HepG2 (cell line): ENCODE measurements at regions of chr9 and their contacts with region 1.

Region 1: DNA sequence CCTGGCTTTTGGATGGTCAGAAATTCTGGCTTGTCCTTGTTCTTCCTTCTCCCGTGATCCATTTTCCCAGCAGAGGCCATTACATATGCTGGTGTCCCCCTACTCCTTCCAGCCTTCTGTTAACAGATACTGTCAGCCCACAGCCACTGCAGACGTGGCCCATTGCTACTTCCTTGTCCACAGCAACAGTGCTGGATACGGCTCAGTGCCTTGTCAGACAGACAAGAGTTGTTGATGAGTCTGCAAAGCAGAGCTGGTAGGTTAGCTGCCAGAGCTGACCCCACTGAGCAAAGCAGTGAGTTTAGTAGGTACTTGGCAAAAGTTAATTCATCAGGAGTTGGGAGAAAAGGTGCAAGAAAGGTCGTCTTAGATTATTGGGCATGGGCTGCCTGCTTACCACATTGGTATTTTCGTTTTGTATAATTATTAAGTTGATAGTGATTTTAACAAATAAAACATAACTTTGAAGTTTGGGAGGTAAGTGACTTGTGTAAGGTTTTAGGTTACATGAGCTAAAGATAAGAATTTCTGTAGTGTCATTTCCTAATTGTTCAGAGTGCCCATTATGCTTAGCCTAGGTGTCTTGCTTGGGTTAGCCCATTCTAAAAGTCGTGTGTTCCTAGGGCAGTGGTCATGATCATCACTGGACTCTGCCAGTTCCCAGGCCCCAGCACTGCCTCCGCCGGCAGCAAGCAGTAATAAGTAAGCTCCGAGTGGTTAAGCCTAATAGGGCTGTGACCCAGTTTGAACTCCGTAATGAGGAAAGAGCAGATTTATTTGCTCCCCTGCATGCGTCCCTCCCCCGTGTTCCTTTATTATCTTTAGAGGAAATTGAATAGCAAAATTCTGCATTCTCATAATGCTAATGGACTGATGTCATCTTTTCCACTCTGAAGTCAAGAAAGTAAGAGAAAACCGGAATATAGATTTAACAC is 292.0 kb downstream of the FANCC start:
- DNase-seq: peak; percentile 80
- ATAC-seq: peak; percentile 46
- H3K4me3 ChIP-seq: 0 out of 6 replicates have a peak overlapping the region, but pooled peaks of 1 of the 3 experiments have one; percentile 47
- H3K27ac ChIP-seq: peak overlapping the region; percentile 94
- H3K4me1 ChIP-seq: peaks cover 100% of the 10 kb centered on the region
- H3K27me3 ChIP-seq: no peaks in the 10 kb centered on the region
- CTCF ChIP-seq: peak; percentile 44
- EP300 ChIP-seq: peak; percentile 28 to 35; a peak in 1 of 4 replicates
- POLR2A ChIP-seq: 0 out of 4 replicates have a peak, but pooled peaks of 1 of the 2 experiments have one; percentile 13
- RAD21 ChIP-seq: 0 out of 2 replicates have a peak, but pooled peaks have one; percentile 40

Region 2: GRCh38 chr9:95073021-95073607 is 47.6 kb after region 1 on chr9:
- CTCF ChIA-PET with region 1: no interaction called
- POLR2A ChIA-PET with region 1: interaction called, 21 read pairs
- in situ Hi-C with region 1: no loop called
- intact Hi-C with region 1: no loop called
- DNase-seq: peak; percentile 25
- ATAC-seq: peak; percentile 47
- H3K4me3 ChIP-seq: no peak overlapping the region
- H3K27ac ChIP-seq: no peak overlapping the region
- H3K4me1 ChIP-seq: peaks cover 48% of the 10 kb centered on the region
- H3K27me3 ChIP-seq: no peaks in the 10 kb centered on the region
- CTCF ChIP-seq: peak; percentile 58
- EP300 ChIP-seq: no peak
- POLR2A ChIP-seq: no peak
- RAD21 ChIP-seq: peak; percentile 65